ENCODE measurements at regions of chr11 and their contacts with region 1.

Region 1: GRCh38 chr11:13316528-13316961 is 39.0 kb downstream of the BMAL1 start:
- DNase-seq: peak; percentile 26
- H3K4me3 Mint-ChIP-seq: no peak overlapping the region
- H3K27ac Mint-ChIP-seq: peak overlapping the region; percentile 33
- H3K4me1 Mint-ChIP-seq: peaks cover 68% of the 10 kb centered on the region
- H3K27me3 Mint-ChIP-seq: no peaks in the 10 kb centered on the region

Region 2: GRCh38 chr11:13335319-13335718 is 18.8 kb after region 1 on chr11:
- CTCF ChIA-PET with region 1: interaction called, 24 read pairs
- intact Hi-C with region 1: no loop called
- DNase-seq: peak; percentile 86
- H3K4me3 Mint-ChIP-seq: no peak overlapping the region
- H3K27ac Mint-ChIP-seq: no peak overlapping the region
- H3K4me1 Mint-ChIP-seq: peaks cover 76% of the 10 kb centered on the region
- H3K27me3 Mint-ChIP-seq: no peaks in the 10 kb centered on the region

Measured in activated naive CD4-positive, alpha-beta T cell treated with anti-CD3 and anti-CD28 coated beads for 36 hours (primary cell).